Breast epithelium (tissue), 4 donors: ENCODE measurements at regions of chr3 and their contacts with region 1.

Region 1: DNA sequence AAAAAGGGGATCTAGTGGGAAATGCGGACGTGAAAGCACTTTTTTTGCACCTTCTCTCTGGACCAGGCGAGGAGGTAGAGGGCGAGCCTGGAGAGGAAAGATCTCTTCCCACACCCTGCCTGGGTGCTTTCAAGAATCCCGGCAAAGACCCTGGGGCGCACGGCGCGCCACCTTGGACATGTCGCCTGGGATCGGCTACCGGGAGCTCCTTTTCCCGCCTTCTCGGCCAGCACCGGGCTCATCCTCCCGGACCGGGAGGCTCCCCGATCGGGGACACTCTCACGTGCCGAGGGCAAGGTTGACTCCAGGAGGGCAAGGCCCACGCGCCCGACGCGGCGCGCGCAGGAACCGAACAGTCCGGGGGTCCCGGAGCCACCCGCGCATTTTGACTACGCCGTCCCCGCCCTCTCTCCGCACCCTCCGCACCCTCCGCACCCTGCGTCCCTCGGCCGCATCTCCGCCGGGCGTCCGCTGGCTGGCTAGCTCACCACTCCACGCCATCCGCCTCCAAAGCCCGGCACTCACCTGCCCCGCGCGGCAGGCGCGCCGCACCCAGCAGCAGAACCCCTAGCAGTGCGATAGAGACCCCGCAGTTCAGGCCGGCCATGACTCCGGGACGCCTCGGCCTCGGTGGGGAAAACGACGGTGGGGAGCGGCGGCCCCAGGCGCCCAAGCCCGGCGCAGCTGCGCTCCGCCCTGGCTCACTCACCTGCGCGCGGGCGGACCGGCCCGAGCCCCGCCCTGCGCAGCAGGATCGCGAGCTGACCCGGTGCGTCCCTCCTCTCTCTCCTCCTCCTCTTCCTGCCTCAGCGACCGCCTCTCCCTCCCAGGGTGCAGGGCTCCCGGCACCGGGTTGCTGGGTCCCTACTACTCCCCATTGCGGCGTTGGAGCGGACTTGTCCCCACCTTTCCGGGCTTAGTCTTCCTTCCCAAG is at the start of gene CDCP1:
- DNase-seq: no peak
- H3K4me3 ChIP-seq: peak within 1 kb of the TSS; percentile 46 to 85 (median 58)
- H3K27ac ChIP-seq: peak within 1 kb of the TSS; percentile 75 to 80
- H3K4me1 ChIP-seq: no peaks in the 10 kb centered on the region
- H3K27me3 ChIP-seq: peaks cover 0 to 4% of the 10 kb centered on the region in 2 donors
- CTCF ChIP-seq: no peak
- POLR2A ChIP-seq: peak; percentile 24
- total RNA-seq, gene CDCP1: 1.9 to 11.3 (median 8.5) TPM

Region 2: DNA sequence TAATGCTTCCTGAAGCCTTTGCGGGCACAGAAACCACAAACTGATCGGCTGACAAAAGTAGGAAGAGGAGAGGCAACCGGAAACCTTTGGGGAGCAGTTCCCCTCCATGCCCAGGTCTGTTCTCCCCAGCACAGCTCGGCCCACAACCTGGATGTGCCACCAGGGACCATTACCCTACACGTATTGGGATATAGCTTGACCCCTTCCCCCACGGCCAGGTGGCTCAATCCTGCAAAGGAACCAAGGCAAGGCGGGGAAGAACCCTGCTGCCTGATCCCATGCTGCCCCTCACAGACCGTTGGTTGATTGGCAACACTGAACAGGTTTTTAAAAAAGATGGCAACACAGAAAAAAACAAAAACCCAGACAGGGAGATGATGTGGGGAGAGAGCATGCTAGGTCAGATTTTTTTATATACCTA is 827.0 kb before region 1 on chr3:
- intact Hi-C with region 1: loop called (anchors 10 kb)
- DNase-seq: no peak
- H3K4me3 ChIP-seq: no peak overlapping the region
- H3K27ac ChIP-seq: no peak overlapping the region
- H3K4me1 ChIP-seq: no peaks in the 10 kb centered on the region
- H3K27me3 ChIP-seq: no peaks in the 10 kb centered on the region
- CTCF ChIP-seq: no peak
- POLR2A ChIP-seq: no peak